Natural killer cell (primary cell): ENCODE measurements at regions of chr1 and their contacts with region 1.

Region 1: DNA sequence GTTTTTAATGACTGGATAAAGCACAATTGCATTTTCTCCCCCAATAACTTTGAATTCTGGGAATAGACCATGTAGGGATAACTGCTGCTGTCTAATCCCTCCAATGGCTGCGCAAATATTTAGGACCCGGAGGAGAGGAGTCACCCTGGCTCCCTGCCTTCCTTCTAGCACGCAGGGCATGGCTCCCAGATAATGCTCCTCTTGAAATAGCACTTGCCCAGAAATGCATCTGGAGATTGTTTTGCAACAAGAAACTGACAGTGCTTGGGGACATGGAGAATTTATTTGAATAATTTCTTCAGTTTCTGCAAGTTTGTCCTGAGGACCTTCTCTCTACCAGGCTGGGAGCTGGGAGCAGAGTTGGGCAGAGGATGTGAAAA is 83.5 kb downstream of the MAN1C1 start:
- DNase-seq: no peak
- ATAC-seq: no peak
- H3K4me3 ChIP-seq: no peak overlapping the region
- H3K4me3 Mint-ChIP-seq: no peak overlapping the region
- H3K27ac ChIP-seq: no peak overlapping the region
- H3K27ac Mint-ChIP-seq: no peak overlapping the region
- H3K4me1 ChIP-seq: peaks cover 13% of the 10 kb centered on the region
- H3K4me1 Mint-ChIP-seq: peaks cover 15 to 20% of the 10 kb centered on the region in 2 donors
- H3K27me3 ChIP-seq: peaks cover 9% of the 10 kb centered on the region
- H3K27me3 Mint-ChIP-seq: peaks cover 17 to 32% of the 10 kb centered on the region in 2 donors
- CTCF ChIP-seq: no peak

Region 2: DNA sequence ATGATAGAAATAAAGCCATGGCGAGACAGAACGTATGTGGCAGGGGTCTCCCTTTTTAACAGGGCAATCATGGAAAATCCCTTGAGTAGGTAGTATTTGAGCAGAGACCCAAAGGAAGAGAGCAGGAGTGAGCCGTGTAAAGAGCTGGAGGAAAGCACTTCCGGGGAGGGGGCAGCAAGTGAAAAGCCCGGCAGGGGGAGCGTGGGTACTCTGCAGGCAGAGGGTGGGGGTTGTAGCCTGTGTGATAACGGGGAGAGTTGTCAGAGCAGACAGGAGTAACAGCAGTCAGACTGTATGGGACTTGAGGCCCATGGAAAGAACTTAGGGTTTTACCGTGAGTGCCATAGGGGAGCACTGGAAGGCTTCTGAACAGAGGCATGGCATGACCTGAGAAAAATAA is 207.8 kb before region 1 on chr1:
- intact Hi-C with region 1: no loop called
- DNase-seq: no peak
- ATAC-seq: no peak
- H3K4me3 ChIP-seq: no peak overlapping the region
- H3K4me3 Mint-ChIP-seq: no peak overlapping the region
- H3K27ac ChIP-seq: no peak overlapping the region
- H3K27ac Mint-ChIP-seq: peak overlapping the region in 1 of 2 donors; percentile 15
- H3K4me1 ChIP-seq: no peaks in the 10 kb centered on the region
- H3K4me1 Mint-ChIP-seq: no peaks in the 10 kb centered on the region
- H3K27me3 ChIP-seq: no peaks in the 10 kb centered on the region
- H3K27me3 Mint-ChIP-seq: no peaks in the 10 kb centered on the region
- CTCF ChIP-seq: no peak

Region 3: GRCh38 chr1:25642574-25643108 is 57.5 kb before region 1 on chr1:
- intact Hi-C with region 1: loop called (anchors 10 kb)
- DNase-seq: peak; percentile 39 to 89
- ATAC-seq: peak; percentile 85 to 95 (median 88)
- H3K4me3 ChIP-seq: no peak overlapping the region
- H3K4me3 Mint-ChIP-seq: peak overlapping the region; percentile 57
- H3K27ac ChIP-seq: peak overlapping the region; percentile 56
- H3K27ac Mint-ChIP-seq: peak overlapping the region; percentile 76 to 77
- H3K4me1 ChIP-seq: peaks cover 24% of the 10 kb centered on the region
- H3K4me1 Mint-ChIP-seq: peaks cover 20 to 28% of the 10 kb centered on the region in 2 donors
- H3K27me3 ChIP-seq: peaks cover 2% of the 10 kb centered on the region
- H3K27me3 Mint-ChIP-seq: no peaks in the 10 kb centered on the region
- CTCF ChIP-seq: no peak

Region 4: GRCh38 chr1:25683701-25684100 is 16.4 kb before region 1 on chr1:
- intact Hi-C with region 1: no loop called
- DNase-seq: no peak
- ATAC-seq: no peak
- H3K4me3 ChIP-seq: no peak overlapping the region
- H3K4me3 Mint-ChIP-seq: no peak overlapping the region
- H3K27ac ChIP-seq: no peak overlapping the region
- H3K27ac Mint-ChIP-seq: no peak overlapping the region
- H3K4me1 ChIP-seq: no peaks in the 10 kb centered on the region
- H3K4me1 Mint-ChIP-seq: peaks cover 3 to 8% of the 10 kb centered on the region in 2 donors
- H3K27me3 ChIP-seq: no peaks in the 10 kb centered on the region
- H3K27me3 Mint-ChIP-seq: peaks cover 0 to 8% of the 10 kb centered on the region in 2 donors
- CTCF ChIP-seq: no peak